GM18951 (cell line): ENCODE measurements at regions of chr7 and their contacts with region 1.

Region 1: DNA sequence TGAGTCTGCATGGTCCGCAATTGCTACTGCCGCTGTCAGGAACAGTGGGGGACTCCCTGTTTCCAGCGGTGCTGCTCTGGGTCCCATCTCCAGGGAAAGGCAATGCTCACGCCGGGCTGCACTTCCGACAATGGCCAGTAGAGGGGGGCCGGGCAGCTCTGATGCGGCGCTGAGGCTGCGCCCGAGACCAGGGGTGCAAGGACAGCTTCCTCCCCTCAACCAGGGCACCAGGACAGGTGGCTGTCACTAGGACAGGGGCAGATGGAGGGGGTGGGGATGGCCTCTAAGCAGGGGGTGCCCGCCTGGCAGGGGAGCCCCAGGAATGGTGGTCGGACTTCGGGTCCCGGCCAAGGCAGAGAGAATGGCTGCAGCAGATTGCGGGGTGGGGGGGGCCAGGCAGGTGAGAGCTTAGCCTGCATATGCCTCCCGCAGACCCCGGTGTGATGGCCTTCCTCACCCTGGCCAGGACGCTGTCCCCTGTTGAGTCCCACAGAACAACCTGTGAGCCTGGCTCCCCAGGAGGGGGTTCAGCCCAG is 71.0 kb upstream of the KCTD7 start:
- POLR2A ChIP-seq: no peak

Region 2: GRCh38 chr7:66779669-66780409 is 222.2 kb after region 1 on chr7:
- in situ Hi-C with region 1: loop called (anchors 25 kb)
- POLR2A ChIP-seq: no peak